Activated T-helper 2 cell treated with anti-CD3 and anti-CD28 coated beads, Interferon-gamma antibody, Interleukin-2, Interleukin-4, amounts not matched to agents 10 μg/mL and 5 μg/mL and 100 μg/mL, durations not matched to agents 14 hours and 24 hours and 36 hours (primary cell): ENCODE measurements at regions of chr16 and their contacts with region 1.

Region 1: GRCh38 chr16:74466872-74467271 is 45.6 kb upstream of the CLEC18B start:
- DNase-seq: no peak
- H3K4me3 Mint-ChIP-seq: no peak overlapping the region
- H3K27ac Mint-ChIP-seq: no peak overlapping the region
- H3K4me1 Mint-ChIP-seq: peaks cover 22% of the 10 kb centered on the region
- H3K27me3 Mint-ChIP-seq: no peaks in the 10 kb centered on the region

Region 2: DNA sequence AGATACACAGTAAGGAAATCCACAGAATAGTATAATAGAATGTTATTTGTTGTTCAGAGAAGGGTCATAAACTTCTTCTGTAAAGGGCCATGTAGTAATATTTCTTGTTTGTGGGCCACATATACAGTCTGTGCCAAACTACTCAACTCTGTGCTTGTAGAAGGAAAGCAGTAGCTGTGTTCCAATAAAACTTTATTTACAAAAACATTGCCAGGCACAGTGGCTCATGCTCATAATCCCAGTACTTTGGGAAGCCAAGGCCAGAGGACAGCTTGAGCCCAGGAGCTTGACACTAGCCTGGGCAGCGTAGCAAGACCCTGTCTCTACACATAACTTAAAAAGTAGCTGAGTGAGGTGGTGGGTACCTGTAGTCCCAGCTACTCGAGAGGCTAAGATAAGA is 783.1 kb before region 1 on chr16:
- intact Hi-C with region 1: no loop called
- DNase-seq: no peak
- H3K4me3 Mint-ChIP-seq: no peak overlapping the region
- H3K27ac Mint-ChIP-seq: no peak overlapping the region
- H3K4me1 Mint-ChIP-seq: no peaks in the 10 kb centered on the region
- H3K27me3 Mint-ChIP-seq: no peaks in the 10 kb centered on the region

Region 3: DNA sequence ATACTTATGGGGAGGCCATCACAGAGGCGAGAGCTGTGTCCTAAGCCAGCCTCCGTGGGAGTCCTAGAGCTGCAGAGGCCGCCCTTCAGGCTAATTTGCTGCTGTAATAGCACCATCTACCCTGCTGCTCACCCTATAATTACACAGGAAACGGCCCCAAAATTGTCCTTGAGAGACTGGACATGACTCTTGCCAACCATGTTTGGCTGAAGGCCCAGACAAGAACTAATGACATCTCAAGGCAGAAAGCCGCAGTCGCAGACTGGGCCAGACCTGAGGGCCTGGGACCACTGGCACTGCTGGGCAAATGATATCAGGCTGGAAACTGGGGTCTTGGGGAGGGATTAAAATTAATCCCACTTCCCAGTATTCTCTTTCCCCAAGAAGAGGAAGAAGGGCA is 146.2 kb before region 1 on chr16:
- intact Hi-C with region 1: no loop called
- DNase-seq: no peak
- H3K4me3 Mint-ChIP-seq: no peak overlapping the region
- H3K27ac Mint-ChIP-seq: no peak overlapping the region
- H3K4me1 Mint-ChIP-seq: no peaks in the 10 kb centered on the region
- H3K27me3 Mint-ChIP-seq: no peaks in the 10 kb centered on the region

Region 4: DNA sequence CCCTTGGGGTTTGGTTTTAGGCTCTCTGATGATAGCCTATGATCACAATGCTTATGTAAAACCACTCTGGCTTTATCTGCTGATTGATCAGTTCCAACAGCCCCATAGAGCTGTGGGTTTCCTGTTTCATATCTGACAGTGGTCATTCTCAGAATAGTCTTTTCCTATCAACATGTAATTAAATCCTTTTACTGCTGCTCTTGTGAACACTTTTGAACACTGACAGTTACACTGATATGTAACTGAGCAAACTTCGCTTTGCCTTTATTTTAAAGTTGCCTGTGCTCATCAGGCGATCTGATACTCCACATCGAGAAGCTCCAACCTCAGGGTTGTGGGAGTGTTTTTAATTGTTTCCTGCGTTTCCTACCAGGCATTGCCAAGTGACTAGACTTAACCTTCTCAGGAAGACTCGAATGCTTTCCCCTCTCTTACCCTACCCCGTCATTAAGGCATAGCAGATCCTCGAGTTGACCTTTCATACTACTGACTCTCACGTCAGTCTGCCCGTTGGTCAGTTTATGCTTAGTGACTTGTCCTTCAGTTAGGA is 28.3 kb before region 1 on chr16:
- intact Hi-C with region 1: loop called (anchors 2 kb)
- DNase-seq: peak; percentile 18
- H3K4me3 Mint-ChIP-seq: peak overlapping the region; percentile 13
- H3K27ac Mint-ChIP-seq: no peak overlapping the region
- H3K4me1 Mint-ChIP-seq: peaks cover 20% of the 10 kb centered on the region
- H3K27me3 Mint-ChIP-seq: peaks cover 16% of the 10 kb centered on the region

Region 5: GRCh38 chr16:74480141-74481029 is 13.5 kb after region 1 on chr16:
- intact Hi-C with region 1: no loop called
- DNase-seq: no peak
- H3K4me3 Mint-ChIP-seq: no peak overlapping the region
- H3K27ac Mint-ChIP-seq: no peak overlapping the region
- H3K4me1 Mint-ChIP-seq: peaks cover 2% of the 10 kb centered on the region
- H3K27me3 Mint-ChIP-seq: no peaks in the 10 kb centered on the region